ENCODE measurements at regions of chr1 and their contacts with region 1.

Region 1: DNA sequence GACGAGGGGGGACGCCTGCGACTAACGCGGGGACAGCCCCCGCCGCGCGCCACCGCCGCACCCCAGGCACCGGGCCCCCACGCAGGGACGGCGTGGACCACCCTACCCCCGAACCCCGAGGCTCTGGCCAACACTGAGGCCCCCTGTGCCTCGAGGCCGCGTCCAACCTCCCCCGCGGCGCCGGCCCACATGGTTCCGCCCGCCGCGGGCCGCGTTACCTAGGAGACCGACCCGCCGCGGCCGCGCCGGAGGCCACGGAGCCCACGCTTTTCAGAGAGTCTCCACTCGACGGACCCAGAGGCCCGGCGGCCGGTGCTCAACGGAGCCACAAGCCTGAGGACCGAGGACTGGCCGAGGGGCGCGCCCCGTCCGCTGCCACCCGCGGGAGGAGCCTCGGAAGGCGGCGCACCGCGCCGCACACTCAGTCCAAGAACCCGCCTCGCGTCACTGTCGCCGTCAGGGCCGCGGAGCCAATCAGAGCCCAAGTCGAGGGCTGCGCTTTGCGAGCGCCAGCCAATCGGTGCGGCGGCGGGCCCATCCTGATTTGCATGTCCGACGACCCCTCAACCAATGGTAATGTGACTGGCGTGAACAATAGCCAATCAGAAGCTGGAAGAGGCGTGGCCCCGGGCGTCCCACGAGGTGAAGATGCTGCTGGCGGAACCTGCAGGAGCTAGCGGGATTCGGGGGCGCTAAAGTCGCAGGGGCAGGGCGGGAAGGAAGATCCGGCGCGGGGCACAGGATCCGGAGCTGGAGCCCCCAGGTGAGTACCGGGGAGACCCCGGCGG is at the start of gene NPHP4:
- DNase-seq: peak; percentile 99 to 100 (median 99)
- H3K4me3 ChIP-seq: peak within 1 kb of the TSS; percentile 93
- H3K4me3 Mint-ChIP-seq: peak within 1 kb of the TSS; percentile 93 to 99 (median 96)
- H3K27ac ChIP-seq: peak within 1 kb of the TSS; percentile 98
- H3K27ac Mint-ChIP-seq: peak within 1 kb of the TSS; percentile 89 to 98 (median 95)
- H3K4me1 ChIP-seq: peaks cover 32% of the 10 kb centered on the region
- H3K4me1 Mint-ChIP-seq: peaks cover 27 to 40% (median 33%) of the 10 kb centered on the region in 3 donors
- H3K27me3 ChIP-seq: no peaks in the 10 kb centered on the region
- H3K27me3 Mint-ChIP-seq: peaks cover 0 to 3% of the 10 kb centered on the region in 2 donors
- total RNA-seq, gene NPHP4: 11.2 to 11.5 TPM

Region 2: DNA sequence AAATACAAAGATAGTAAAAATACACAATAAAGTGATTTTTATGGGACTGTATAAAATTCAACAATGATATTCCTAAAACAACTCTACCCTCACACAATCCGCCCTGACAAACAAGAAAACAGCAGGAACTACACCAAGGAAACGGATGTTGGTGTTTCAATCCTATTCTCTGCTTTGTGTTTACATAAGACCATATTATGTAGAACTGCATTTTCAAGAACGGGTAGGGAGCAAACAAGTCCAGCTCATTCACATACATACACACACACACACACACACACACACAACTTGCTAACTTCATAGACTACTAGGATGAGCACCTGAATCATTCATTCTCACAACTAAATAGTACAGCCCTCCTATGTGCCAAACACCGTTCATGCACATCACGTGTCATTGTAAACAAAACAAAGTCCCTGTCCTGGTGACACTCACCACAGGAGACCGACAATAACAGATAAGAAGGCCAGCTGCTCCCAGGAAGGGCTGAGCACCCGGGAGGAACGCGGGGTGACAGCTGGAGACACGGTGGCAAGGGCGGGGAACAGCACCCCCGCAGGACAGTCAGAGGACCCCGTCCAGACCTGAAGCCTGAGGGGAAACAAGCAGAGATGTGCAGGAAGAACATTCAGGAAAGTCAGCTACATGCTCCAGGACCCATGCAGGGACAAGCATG is 43.0 kb before region 1 on chr1:
- CTCF ChIA-PET with region 1: no interaction called
- POLR2A ChIA-PET with region 1: no interaction called
- DNase-seq: no peak
- H3K4me3 ChIP-seq: no peak overlapping the region
- H3K4me3 Mint-ChIP-seq: no peak overlapping the region
- H3K27ac ChIP-seq: no peak overlapping the region
- H3K27ac Mint-ChIP-seq: no peak overlapping the region
- H3K4me1 ChIP-seq: no peaks in the 10 kb centered on the region
- H3K4me1 Mint-ChIP-seq: peaks cover under 1 to 4% (median under 1%) of the 10 kb centered on the region in 3 donors
- H3K27me3 ChIP-seq: no peaks in the 10 kb centered on the region
- H3K27me3 Mint-ChIP-seq: no peaks in the 10 kb centered on the region

Region 3: GRCh38 chr1:6026095-6026809 is 34.0 kb after region 1 on chr1:
- CTCF ChIA-PET with region 1: interaction called, 23 read pairs
- POLR2A ChIA-PET with region 1: interaction called, 42 read pairs
- DNase-seq: peak; percentile 91 to 96 (median 91)
- H3K4me3 ChIP-seq: peak overlapping the region; percentile 92
- H3K4me3 Mint-ChIP-seq: peak overlapping the region; percentile 81 to 97 (median 95)
- H3K27ac ChIP-seq: peak overlapping the region; percentile 90
- H3K27ac Mint-ChIP-seq: peak overlapping the region; percentile 88 to 99 (median 98)
- H3K4me1 ChIP-seq: peaks cover 60% of the 10 kb centered on the region
- H3K4me1 Mint-ChIP-seq: peaks cover 53 to 67% (median 58%) of the 10 kb centered on the region in 3 donors
- H3K27me3 ChIP-seq: no peaks in the 10 kb centered on the region
- H3K27me3 Mint-ChIP-seq: no peaks in the 10 kb centered on the region

Measured in CD8-positive, alpha-beta memory T cell (primary cell).